H1 (cell line): ENCODE measurements at regions of chr10 and their contacts with region 1.

Region 1: DNA sequence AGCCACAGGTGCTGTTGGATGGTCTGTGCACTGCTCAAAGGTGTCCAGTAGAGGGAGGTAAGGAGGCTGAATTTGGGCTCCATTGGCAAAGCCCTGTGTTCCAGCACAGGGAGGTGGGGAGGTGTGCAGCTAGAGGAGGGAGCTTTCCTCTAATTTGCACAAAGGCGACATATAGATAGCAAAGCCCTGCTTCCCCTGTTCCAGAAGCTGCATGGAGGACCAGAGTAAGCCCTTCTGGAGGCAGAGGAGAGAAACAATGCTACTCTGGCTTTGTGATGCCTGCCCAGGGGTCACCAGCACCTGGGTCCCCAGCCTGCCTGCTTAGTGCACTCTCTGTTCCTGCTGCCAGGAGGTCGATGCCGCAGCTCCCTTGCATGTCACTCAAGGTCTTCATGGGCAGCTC is 3.4 kb upstream of the ARHGAP22 start:
- DNase-seq: peak; percentile 43 to 76
- H3K4me3 ChIP-seq: no peak overlapping the region
- H3K27ac ChIP-seq: no peak overlapping the region
- H3K4me1 ChIP-seq: peaks cover 0 to 17% (median 9%) of the 10 kb centered on the region in 4 experiments; a peak in 6 of 7 replicates
- H3K27me3 ChIP-seq: peaks cover 0 to 21% (median 15%) of the 10 kb centered on the region in 4 experiments; a peak in 6 of 7 replicates
- CTCF ChIP-seq: peak; percentile 80 to 93 (median 85)
- EP300 ChIP-seq: no peak
- POLR2A ChIP-seq: no peak
- RAD21 ChIP-seq: peak; percentile 49 to 70

Region 2: GRCh38 chr10:48215488-48216204 is 392.6 kb before region 1 on chr10:
- CTCF ChIA-PET with region 1: no interaction called
- POLR2A ChIA-PET with region 1: no interaction called
- DNase-seq: peak; percentile 34 to 82
- H3K4me3 ChIP-seq: no peak overlapping the region
- H3K27ac ChIP-seq: no peak overlapping the region
- H3K4me1 ChIP-seq: no peaks in the 10 kb centered on the region
- H3K27me3 ChIP-seq: 0 out of 7 replicates have a peak, but pooled peaks cover 0 to under 1% (median 0%) of the 10 kb centered on the region in 4 experiments
- CTCF ChIP-seq: peak; percentile 70 to 86 (median 85)
- EP300 ChIP-seq: no peak
- POLR2A ChIP-seq: no peak
- RAD21 ChIP-seq: peak; percentile 73 to 85

Region 3: GRCh38 chr10:48463318-48464003 is 144.8 kb before region 1 on chr10:
- CTCF ChIA-PET with region 1: interaction called, 11 read pairs
- POLR2A ChIA-PET with region 1: no interaction called
- DNase-seq: peak in 1 of 2 experiments; percentile 38
- H3K4me3 ChIP-seq: no peak overlapping the region
- H3K27ac ChIP-seq: no peak overlapping the region
- H3K4me1 ChIP-seq: peaks cover 0 to 20% (median 10%) of the 10 kb centered on the region in 4 experiments; a peak in 3 of 7 replicates
- H3K27me3 ChIP-seq: peaks cover 0 to 12% (median 8%) of the 10 kb centered on the region in 4 experiments; a peak in 4 of 7 replicates
- CTCF ChIP-seq: no peak
- EP300 ChIP-seq: no peak
- POLR2A ChIP-seq: no peak
- RAD21 ChIP-seq: 0 out of 4 replicates have a peak, but pooled peaks of 1 of the 2 experiments have one; percentile 14

Region 4: GRCh38 chr10:48523820-48524758 is 84.2 kb before region 1 on chr10:
- CTCF ChIA-PET with region 1: interaction called, 10 read pairs
- POLR2A ChIA-PET with region 1: no interaction called
- DNase-seq: peak in 1 of 2 experiments; percentile 83
- H3K4me3 ChIP-seq: peak overlapping the region; percentile 54 to 78 (median 73)
- H3K27ac ChIP-seq: no peak overlapping the region
- H3K4me1 ChIP-seq: peaks cover 2 to 16% (median 3%) of the 10 kb centered on the region in 4 experiments; a peak in 6 of 7 replicates
- H3K27me3 ChIP-seq: peaks cover 0 to 2% (median 0%) of the 10 kb centered on the region in 4 experiments; a peak in 1 of 7 replicates
- CTCF ChIP-seq: peak; percentile 56 to 82 (median 71)
- EP300 ChIP-seq: no peak; a peak in 1 of 3 replicates
- POLR2A ChIP-seq: no peak
- RAD21 ChIP-seq: peak; percentile 41 to 73; a peak in 3 of 4 replicates

Region 5: DNA sequence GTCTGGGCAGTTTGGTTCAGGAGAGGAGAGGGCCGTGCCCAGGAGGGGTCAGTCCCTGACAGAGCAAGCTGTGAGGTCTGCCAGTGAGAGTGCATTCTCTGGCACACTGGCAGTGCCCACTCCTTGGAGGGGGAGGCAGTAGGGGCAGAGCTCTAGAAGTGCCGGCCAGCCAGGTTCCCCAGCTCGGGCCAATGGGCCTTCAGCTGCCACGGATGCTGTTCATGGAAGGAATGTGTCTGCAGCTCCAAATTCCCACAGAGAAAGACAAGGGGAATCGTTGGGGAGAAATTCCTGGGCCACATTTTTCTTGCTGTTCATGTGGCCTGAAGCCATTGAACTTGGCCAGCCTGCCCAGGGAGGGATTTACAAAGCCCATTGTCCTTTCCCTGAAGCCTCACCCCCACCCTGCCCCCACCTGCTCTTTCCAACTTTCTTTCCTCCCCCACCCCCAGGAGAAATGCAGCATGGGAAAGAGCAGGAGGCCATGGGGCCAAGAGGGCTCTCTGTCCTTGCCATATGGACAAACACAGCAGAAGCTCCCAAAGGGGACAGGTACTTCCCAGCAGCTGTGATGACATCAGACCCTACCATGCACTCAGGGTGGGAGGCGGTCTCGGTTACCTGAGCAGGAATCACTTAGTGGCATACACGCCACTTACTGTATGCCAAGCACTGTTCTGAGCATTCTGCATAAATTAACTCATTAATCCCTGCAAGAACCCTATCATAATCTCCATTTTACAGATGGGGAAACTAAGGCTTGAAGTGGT is 74.1 kb before region 1 on chr10:
- CTCF ChIA-PET with region 1: interaction called, 12 read pairs
- POLR2A ChIA-PET with region 1: interaction called, 3 read pairs
- DNase-seq: no peak
- H3K4me3 ChIP-seq: peak overlapping the region in 1 of 4 experiments; percentile 1; a peak in 1 of 8 replicates
- H3K27ac ChIP-seq: peak overlapping the region; percentile 17; the same call in 1 of the 2 replicates
- H3K4me1 ChIP-seq: peaks cover 0 to 31% (median 22%) of the 10 kb centered on the region in 4 experiments; a peak in 6 of 7 replicates
- H3K27me3 ChIP-seq: no peaks in the 10 kb centered on the region
- CTCF ChIP-seq: no peak
- EP300 ChIP-seq: no peak
- POLR2A ChIP-seq: no peak
- RAD21 ChIP-seq: no peak

Region 6: GRCh38 chr10:48589266-48589665 is 19.0 kb before region 1 on chr10:
- CTCF ChIA-PET with region 1: interaction called, 172 read pairs
- POLR2A ChIA-PET with region 1: interaction called, 3 read pairs
- DNase-seq: no peak
- H3K4me3 ChIP-seq: no peak overlapping the region
- H3K27ac ChIP-seq: no peak overlapping the region
- H3K4me1 ChIP-seq: peaks cover 0 to 4% (median 3%) of the 10 kb centered on the region in 4 experiments; a peak in 5 of 7 replicates
- H3K27me3 ChIP-seq: no peaks in the 10 kb centered on the region
- CTCF ChIP-seq: no peak
- EP300 ChIP-seq: no peak
- POLR2A ChIP-seq: no peak
- RAD21 ChIP-seq: no peak

Region 7: DNA sequence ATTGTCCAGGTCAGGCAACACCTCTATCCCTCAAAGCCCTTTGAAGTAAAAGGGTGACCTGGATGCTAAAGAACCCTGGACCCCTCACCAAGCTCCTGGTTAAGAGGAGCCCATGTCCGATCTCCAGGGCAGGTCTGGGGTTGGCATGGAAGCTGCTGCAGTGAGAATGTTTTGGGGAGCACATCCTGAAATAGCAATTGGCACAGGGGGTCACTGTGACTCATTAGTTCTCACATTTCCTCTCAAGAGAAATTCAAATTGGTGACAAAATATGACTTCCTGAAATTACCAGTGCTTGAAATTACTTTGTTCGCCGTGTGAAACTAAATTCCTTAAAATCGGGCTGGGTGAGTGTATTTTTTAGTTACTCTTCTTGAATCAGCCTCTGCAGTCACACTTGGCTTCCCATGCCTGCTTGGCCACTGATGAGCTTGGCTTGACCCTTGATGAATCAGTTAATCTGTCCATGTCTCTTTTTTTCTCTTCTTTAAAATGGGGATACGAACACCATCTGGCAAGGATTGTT is 15.4 kb after region 1 on chr10:
- CTCF ChIA-PET with region 1: interaction called, 16 read pairs
- POLR2A ChIA-PET with region 1: no interaction called
- DNase-seq: no peak
- H3K4me3 ChIP-seq: no peak overlapping the region
- H3K27ac ChIP-seq: no peak overlapping the region
- H3K4me1 ChIP-seq: no peaks in the 10 kb centered on the region
- H3K27me3 ChIP-seq: no peaks in the 10 kb centered on the region
- CTCF ChIP-seq: no peak
- EP300 ChIP-seq: no peak
- POLR2A ChIP-seq: no peak
- RAD21 ChIP-seq: no peak

Region 8: GRCh38 chr10:48649349-48649944 is 41.2 kb after region 1 on chr10:
- CTCF ChIA-PET with region 1: interaction called, 84 read pairs
- POLR2A ChIA-PET with region 1: no interaction called
- DNase-seq: peak in 1 of 2 experiments; percentile 31
- H3K4me3 ChIP-seq: no peak overlapping the region
- H3K27ac ChIP-seq: no peak overlapping the region
- H3K4me1 ChIP-seq: no peaks in the 10 kb centered on the region
- H3K27me3 ChIP-seq: 0 out of 7 replicates have a peak, but pooled peaks cover 0 to 3% (median 0%) of the 10 kb centered on the region in 4 experiments
- CTCF ChIP-seq: peak in 2 of 3 experiments; percentile 6 to 15; a peak in 2 of 4 replicates
- EP300 ChIP-seq: no peak
- POLR2A ChIP-seq: no peak
- RAD21 ChIP-seq: no peak

Region 9: DNA sequence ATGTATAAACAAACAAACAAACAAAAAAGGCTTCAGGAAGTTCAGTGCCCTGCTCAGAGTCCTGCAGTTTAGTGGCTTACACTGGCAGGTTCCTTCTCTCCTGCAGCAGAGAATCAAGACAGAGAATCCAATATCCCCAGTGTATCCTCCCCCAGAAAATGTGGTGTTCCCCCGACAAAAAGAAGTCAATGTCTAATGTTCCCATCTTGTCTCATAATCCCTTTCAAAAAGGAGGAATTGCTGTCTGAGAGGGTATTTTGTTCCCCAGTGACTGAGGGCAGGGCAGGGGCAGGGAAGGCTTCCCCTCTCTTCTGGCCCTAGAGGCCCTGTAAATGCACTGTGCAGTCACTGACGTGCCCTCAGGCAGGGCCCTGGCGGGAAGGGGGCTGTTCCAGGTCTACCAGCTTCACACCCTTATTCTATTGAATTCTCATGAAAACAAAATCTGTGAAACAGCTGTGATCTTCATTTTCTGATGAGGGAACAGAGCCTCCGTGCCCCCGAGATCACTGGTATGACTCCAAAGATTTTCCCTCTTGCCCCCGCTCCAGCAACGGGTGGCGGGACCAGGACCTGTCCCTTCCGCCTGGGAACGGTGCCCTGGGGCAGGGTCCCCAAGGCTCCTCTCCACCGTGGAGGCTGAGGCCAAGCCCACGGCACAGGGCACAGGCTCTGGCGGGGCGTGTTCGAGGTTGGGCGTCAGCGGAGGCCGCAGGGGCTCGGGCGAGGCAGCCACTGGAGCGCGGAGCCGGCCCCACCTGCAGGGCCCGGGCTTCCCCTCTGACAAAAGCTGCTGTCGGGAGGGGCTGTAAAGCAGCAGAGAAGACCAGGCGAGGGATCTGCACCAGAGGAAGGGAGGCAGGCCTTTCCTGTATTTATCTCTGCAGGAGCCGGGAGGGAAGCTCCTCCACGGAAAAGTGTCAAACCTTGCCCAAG is 63.0 kb after region 1 on chr10:
- CTCF ChIA-PET with region 1: no interaction called
- POLR2A ChIA-PET with region 1: no interaction called
- DNase-seq: peak in 1 of 2 experiments; percentile 63
- H3K4me3 ChIP-seq: peak overlapping the region in 2 of 4 experiments; percentile 23 to 42; a peak in 4 of 8 replicates
- H3K27ac ChIP-seq: no peak overlapping the region
- H3K4me1 ChIP-seq: peaks cover 0 to 5% (median 2%) of the 10 kb centered on the region in 4 experiments; a peak in 4 of 7 replicates
- H3K27me3 ChIP-seq: no peaks in the 10 kb centered on the region; a peak in 2 of 7 replicates
- CTCF ChIP-seq: no peak
- EP300 ChIP-seq: no peak
- POLR2A ChIP-seq: no peak
- RAD21 ChIP-seq: no peak

Region 10: DNA sequence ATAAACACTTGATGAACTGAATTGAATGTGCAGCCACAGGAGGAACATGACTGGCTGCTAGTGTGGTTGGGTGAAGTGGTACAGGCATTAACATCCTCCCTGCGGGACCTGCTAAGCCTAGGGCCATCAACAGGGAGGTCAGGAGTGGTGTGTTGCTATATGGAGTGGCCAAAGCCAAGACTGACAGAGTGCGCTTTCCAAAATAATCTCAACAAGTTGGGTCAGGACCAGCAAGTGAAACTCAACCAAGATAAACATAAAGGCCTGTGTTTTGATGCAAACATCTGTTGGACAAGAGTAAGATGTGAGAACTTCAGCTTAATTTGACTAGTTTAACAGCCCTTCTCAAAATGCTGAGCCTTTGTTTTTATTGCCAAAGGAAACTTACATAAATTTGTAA is 174.1 kb after region 1 on chr10:
- CTCF ChIA-PET with region 1: no interaction called
- POLR2A ChIA-PET with region 1: no interaction called
- DNase-seq: peak in 1 of 2 experiments; percentile 26
- H3K4me3 ChIP-seq: no peak overlapping the region
- H3K27ac ChIP-seq: no peak overlapping the region
- H3K4me1 ChIP-seq: no peaks in the 10 kb centered on the region
- H3K27me3 ChIP-seq: no peaks in the 10 kb centered on the region
- CTCF ChIP-seq: no peak
- EP300 ChIP-seq: no peak
- POLR2A ChIP-seq: no peak
- RAD21 ChIP-seq: no peak